Activated T-helper 2 cell treated with anti-CD3 and anti-CD28 coated beads, Interferon-gamma antibody, Interleukin-2, Interleukin-4, amounts not matched to agents 10 μg/mL and 5 μg/mL and 100 μg/mL, durations not matched to agents 14 hours and 24 hours and 36 hours (primary cell): ENCODE measurements at regions of chr6 and their contacts with region 1.

Region 1: GRCh38 chr6:129598244-129599187 is 111.5 kb downstream of the ARHGAP18 start:
- DNase-seq: no peak
- H3K4me3 Mint-ChIP-seq: no peak overlapping the region
- H3K27ac Mint-ChIP-seq: no peak overlapping the region
- H3K4me1 Mint-ChIP-seq: peaks cover 3% of the 10 kb centered on the region
- H3K27me3 Mint-ChIP-seq: no peaks in the 10 kb centered on the region

Region 2: GRCh38 chr6:129317931-129318820 is 280.3 kb before region 1 on chr6:
- intact Hi-C with region 1: no loop called
- DNase-seq: no peak
- H3K4me3 Mint-ChIP-seq: no peak overlapping the region
- H3K27ac Mint-ChIP-seq: no peak overlapping the region
- H3K4me1 Mint-ChIP-seq: no peaks in the 10 kb centered on the region
- H3K27me3 Mint-ChIP-seq: peaks cover 7% of the 10 kb centered on the region

Region 3: GRCh38 chr6:129730477-129731165 is 132.1 kb after region 1 on chr6:
- intact Hi-C with region 1: loop called (anchors 1 kb)
- DNase-seq: no peak
- H3K4me3 Mint-ChIP-seq: no peak overlapping the region
- H3K27ac Mint-ChIP-seq: peak overlapping the region; percentile 8
- H3K4me1 Mint-ChIP-seq: peaks cover 19% of the 10 kb centered on the region
- H3K27me3 Mint-ChIP-seq: no peaks in the 10 kb centered on the region